Ascending aorta (tissue), 2 donors: ENCODE measurements at regions of chr9 and their contacts with region 1.

Region 1: DNA sequence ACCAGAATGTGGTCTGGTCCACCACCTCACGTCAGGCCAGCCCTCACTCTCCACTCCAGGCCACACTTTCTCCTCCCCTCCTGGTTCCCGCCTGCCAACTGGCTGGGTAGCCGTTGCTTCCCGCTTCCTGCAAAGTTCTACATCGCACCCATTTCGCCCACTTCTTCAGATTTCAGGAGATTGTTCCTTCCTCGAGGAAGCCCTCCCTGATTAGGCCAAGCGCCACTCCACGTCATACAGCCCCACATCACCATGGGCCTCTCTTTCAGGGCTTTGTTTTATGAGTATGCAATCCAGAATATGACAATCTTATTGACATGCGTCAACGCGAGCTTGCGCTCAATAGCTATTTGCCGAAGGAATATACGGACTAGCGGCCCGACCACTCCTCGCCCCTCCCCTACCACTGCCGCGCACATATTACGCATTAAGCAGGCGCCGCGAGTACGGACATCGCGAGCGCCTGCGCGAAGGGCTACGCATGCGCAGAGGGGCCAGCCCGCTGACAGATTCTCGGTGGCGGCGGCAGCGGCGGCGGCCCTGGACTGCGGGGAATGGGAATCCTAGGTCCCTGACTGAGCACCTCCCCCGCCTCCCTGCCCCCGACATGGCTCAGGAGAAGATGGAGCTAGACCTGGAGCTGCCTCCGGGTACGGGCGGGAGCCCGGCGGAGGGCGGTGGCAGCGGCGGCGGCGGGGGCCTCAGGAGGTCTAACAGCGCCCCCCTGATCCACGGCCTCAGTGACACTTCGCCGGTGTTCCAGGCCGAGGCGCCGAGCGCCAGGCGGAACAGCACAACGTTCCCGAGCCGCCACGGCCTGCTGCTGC is 74.7 kb downstream of the PIP5K1B start:
- DNase-seq: peak; percentile 69 to 96
- H3K4me3 ChIP-seq: peak overlapping the region; percentile 76 to 83
- H3K27ac ChIP-seq: peak overlapping the region; percentile 95 to 96
- H3K4me1 ChIP-seq: peaks cover 20 to 37% of the 10 kb centered on the region in 2 donors
- H3K27me3 ChIP-seq: no peaks in the 10 kb centered on the region
- CTCF ChIP-seq: peak in 2 of 3 experiments; percentile 19 to 46

Region 2: DNA sequence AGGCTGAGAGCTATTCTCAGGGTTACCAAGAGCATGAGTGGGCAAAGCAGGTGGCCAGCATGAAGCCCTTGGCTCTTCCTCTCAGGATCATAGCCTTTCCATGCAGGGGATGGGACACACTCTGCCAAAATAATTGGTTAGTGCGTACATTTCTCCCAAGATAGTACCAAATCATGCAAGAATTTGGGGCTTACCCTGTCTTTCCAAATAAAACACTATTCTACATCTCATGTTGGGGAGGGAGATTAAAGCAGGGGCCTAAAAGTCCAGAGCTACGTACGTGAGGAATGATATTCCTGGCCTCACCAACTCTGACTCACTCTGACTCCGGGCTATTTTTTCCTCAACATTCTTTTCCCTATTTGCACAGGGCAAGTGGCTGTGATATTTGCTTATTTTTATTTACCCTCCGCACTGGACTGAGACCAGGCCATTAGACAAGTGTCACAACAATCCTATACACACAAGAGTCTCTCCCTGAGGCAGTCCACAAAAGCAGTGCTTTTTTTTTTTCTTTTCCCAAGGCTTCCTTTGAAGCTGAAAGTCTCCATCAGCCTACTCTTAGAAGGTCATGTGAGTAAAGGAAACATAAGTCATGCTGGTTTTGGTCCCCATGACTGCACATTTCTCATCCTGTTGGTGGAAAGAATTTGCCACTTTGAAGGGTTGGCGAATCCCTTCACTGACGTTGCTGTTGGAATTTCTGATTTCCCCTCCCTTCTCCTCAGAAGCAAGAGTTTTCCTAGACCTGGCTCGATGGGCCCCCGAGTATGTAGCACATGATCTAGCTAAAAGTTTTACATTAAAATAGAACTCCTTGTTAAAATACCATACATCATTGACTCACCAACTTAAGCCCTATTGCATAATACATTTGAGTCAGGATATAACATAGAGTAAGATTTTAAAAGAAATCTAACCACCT is 279.1 kb before region 1 on chr9:
- intact Hi-C with region 1: loop called (anchors 5 kb)
- DNase-seq: peak in 1 of 2 donors; percentile 81
- H3K4me3 ChIP-seq: peak overlapping the region in 1 of 2 donors; percentile 23
- H3K27ac ChIP-seq: peak overlapping the region; percentile 88 to 94
- H3K4me1 ChIP-seq: peaks cover 4 to 35% of the 10 kb centered on the region in 2 donors
- H3K27me3 ChIP-seq: no peaks in the 10 kb centered on the region
- CTCF ChIP-seq: no peak

Region 3: DNA sequence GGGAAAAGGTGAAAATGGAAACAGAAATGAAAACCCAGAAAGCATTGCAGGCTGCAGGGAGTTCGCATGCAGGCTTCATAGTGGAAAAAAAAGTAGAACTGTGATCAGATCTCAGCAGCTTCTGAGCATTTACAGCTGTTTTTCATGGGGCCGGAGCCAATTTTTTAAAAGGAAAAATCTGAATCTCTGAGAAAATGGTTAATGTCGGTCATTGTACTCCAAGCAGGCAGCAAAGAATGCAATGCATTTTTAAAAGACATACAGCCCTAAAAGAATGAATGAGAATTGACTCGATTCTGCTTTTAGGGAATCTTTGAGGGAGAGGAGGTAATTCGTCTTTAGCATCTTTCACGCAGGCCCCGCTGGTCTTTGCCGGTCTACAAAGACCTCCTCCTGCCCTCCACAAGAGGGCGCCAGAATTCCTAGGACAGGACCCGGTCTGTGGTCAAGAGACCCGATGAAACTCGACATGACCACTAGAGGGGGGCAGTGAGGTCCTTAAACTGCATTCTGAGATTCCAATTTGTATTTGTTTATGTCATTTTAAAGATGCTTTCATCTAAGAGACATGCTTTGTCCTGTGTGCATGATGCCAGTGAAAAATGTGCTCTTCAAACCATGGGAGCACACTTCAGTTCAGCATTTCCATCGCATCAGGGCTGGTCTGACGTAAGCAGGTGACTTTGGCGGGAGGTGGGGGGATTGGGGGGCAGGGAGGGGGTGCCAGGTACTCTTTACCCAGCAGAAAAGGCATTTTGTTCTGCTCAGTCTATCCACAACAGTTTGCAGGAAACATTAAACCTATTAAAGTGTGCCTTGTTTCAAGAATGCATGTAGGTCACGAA is 195.4 kb before region 1 on chr9:
- intact Hi-C with region 1: loop called (anchors 10 kb)
- DNase-seq: peak; percentile 40 to 88
- H3K4me3 ChIP-seq: no peak overlapping the region
- H3K27ac ChIP-seq: no peak overlapping the region
- H3K4me1 ChIP-seq: no peaks in the 10 kb centered on the region
- H3K27me3 ChIP-seq: no peaks in the 10 kb centered on the region
- CTCF ChIP-seq: peak; percentile 94 to 99 (median 96)

Region 4: DNA sequence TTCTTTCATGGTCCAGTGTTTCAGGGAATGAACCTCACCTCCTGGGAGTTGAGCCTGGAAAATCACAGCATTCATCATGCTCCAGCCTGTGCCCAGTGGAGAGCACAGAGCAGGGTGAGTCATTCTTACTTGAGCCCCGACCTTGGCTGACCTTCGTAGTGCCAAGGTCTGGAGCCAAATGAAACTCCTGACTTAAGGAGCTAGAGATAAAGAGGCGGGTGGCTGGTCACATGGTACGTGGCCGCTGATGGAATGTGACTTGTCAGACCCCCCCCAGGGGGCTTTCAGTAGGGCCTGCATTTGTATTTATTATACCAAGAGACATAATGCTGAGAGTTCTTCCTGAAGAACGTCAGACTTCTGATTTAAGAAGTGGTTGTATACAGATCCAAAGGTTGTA is 89.7 kb before region 1 on chr9:
- intact Hi-C with region 1: loop called (anchors 5 kb)
- DNase-seq: peak; percentile 22 to 85
- H3K4me3 ChIP-seq: no peak overlapping the region
- H3K27ac ChIP-seq: peak overlapping the region in 1 of 2 donors; percentile 35
- H3K4me1 ChIP-seq: peaks cover 0 to 6% of the 10 kb centered on the region in 2 donors
- H3K27me3 ChIP-seq: no peaks in the 10 kb centered on the region
- CTCF ChIP-seq: no peak

Region 5: DNA sequence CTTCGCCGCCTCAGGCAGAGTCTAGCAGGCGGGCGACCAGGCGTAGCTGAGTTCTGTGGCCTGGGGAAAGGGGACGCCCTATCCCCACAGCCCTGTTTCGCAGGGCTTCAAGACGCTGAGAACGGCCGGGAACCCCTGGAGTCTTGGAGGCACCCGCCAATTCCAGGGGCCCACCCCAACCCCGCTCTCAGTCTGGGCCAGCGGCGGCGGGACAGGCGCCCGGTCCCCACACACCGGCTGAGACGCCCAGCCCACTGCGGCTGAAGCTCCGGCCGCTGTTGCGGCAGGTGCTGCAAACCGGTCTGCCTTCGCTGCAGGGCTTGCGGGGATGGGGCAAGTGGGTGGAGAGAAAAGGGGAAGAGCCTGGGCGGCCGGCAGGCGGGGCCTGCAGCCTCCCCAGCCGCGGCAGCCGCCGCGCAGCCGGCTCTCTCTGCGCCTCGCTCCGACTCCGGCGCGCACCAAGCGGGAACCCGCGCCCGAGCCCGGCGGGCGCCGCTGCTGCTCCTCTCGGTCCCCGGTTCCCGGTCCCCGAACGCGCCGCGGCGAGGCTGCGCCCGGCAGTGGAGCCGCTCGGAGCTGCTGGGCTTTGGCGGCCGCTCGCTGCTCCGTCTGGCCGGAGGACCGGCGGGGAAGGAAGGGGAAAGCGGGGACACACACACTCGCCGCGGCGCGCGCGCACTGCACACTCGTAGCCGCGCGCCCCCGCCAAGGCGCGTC is 74.8 kb before region 1 on chr9 and contains the start of gene PIP5K1B:
- intact Hi-C with region 1: loop called (anchors 2 kb)
- DNase-seq: peak in 1 of 2 donors; percentile 72
- H3K4me3 ChIP-seq: peak within 1 kb of the TSS; percentile 78 to 88
- H3K27ac ChIP-seq: peak within 1 kb of the TSS; percentile 30 to 81
- H3K4me1 ChIP-seq: no peaks in the 10 kb centered on the region
- H3K27me3 ChIP-seq: no peaks in the 10 kb centered on the region
- CTCF ChIP-seq: peak in 1 of 3 experiments; percentile 21
- total RNA-seq, gene PIP5K1B: 0.85 TPM

Region 6: DNA sequence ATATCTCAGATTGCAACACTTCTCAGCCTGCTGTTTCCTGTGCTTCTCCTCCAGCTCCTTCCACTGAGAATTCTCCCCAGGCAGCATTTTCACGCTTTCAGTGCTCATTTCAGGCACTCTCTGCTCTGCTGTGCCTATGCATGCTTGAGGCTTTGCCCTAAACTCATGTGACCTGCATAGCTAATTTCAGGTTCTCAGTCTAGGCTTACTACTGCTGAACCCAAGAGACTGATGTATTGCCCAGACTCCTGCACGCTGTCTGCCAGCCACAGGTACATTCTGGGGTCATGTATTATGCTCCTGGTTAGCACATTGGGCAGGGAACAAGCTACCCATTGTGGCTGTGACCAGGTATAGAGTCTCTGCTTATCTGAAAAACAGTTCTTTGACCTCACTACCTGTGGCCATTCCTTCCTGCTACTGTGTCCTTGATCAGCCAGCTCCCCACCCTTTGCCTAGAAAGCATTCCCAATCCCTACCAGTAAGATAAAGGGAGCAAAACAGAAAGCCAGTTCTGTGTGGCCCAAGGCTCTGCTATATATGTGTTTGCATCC is 40.1 kb before region 1 on chr9:
- intact Hi-C with region 1: no loop called
- DNase-seq: no peak
- H3K4me3 ChIP-seq: no peak overlapping the region
- H3K27ac ChIP-seq: no peak overlapping the region
- H3K4me1 ChIP-seq: no peaks in the 10 kb centered on the region
- H3K27me3 ChIP-seq: no peaks in the 10 kb centered on the region
- CTCF ChIP-seq: no peak

Region 7: GRCh38 chr9:68844631-68845612 is 65.2 kb after region 1 on chr9:
- intact Hi-C with region 1: loop called (anchors 5 kb)
- DNase-seq: peak in 1 of 2 donors; percentile 77
- H3K4me3 ChIP-seq: no peak overlapping the region
- H3K27ac ChIP-seq: no peak overlapping the region
- H3K4me1 ChIP-seq: peaks cover 0 to 16% of the 10 kb centered on the region in 2 donors
- H3K27me3 ChIP-seq: no peaks in the 10 kb centered on the region
- CTCF ChIP-seq: peak; percentile 34 to 60 (median 52)

Region 8: DNA sequence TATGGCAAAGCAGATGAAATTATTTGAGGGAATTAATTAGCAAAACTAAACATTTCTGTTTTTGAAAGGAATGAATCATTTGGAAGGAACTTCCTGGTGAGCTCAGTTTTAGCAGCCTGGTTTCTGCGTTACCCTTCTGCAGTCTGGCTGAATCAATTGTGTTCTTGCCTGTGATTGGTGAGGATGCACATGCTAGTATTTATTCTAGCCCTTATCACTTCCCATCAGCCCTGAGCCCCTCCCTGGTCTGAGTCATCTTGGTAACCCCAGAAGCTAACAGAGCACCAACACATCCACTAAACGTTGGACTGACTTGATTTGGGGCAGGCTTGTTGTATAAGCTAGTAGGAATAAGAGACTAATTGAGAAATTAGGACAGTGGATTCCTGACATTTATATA is 400.9 kb after region 1 on chr9:
- intact Hi-C with region 1: loop called (anchors 10 kb)
- DNase-seq: peak; percentile 46 to 89
- H3K4me3 ChIP-seq: peak overlapping the region in 1 of 2 donors; percentile 10
- H3K27ac ChIP-seq: peak overlapping the region; percentile 77 to 80
- H3K4me1 ChIP-seq: peaks cover 6 to 34% of the 10 kb centered on the region in 2 donors
- H3K27me3 ChIP-seq: no peaks in the 10 kb centered on the region
- CTCF ChIP-seq: no peak

Region 9: GRCh38 chr9:69376651-69377050 is 596.9 kb after region 1 on chr9:
- intact Hi-C with region 1: no loop called
- DNase-seq: peak; percentile 19 to 81
- H3K4me3 ChIP-seq: no peak overlapping the region
- H3K27ac ChIP-seq: peak overlapping the region in 1 of 2 donors; percentile 29
- H3K4me1 ChIP-seq: peaks cover 4 to 16% of the 10 kb centered on the region in 2 donors
- H3K27me3 ChIP-seq: no peaks in the 10 kb centered on the region
- CTCF ChIP-seq: no peak